ENCODE measurements at regions of chr11 and their contacts with region 1.

Region 1: GRCh38 chr11:14727746-14728145 is 84.1 kb downstream of the PDE3B start:
- DNase-seq: no peak
- H3K4me3 Mint-ChIP-seq: no peak overlapping the region
- H3K27ac Mint-ChIP-seq: no peak overlapping the region
- H3K4me1 Mint-ChIP-seq: peaks cover 52% of the 10 kb centered on the region
- H3K27me3 Mint-ChIP-seq: no peaks in the 10 kb centered on the region

Region 2: DNA sequence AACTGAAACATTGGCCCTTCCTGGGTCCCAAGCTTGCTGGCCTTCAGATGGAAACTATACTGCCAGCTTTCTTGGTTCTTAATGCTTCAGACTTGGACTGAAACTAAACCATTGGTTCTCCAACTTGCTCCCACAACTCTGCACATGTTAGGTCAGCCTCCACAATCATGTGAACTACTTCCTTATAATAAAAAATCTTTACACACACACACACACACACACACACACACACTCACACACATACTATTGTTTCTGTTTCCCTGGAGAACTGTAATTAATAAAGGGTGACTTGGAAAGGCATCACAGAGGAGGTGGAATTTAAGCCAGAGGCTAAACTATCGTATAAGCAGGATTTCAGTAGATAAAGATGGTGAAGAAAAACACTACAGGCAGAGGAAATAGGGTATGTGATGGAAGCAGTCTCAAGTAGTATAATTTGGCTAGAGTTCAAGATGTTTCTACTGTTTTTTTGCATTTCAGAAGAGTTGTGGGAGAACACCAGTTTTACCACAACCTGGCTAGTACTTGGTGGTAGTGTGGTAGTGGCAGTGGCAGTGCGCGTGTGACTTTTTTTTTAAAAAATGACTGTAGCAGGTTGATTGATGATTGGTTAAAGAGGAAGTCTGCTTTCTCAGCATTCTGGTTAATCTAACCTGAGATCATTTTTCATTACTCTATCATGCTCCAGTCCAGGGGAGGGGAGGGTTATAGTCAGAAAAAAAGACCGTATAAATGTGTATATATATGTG is 14.1 kb before region 1 on chr11:
- CTCF ChIA-PET with region 1: interaction called, 3 read pairs
- intact Hi-C with region 1: loop called (anchors 2 kb)
- DNase-seq: peak; percentile 55
- H3K4me3 Mint-ChIP-seq: peak overlapping the region; percentile 72
- H3K27ac Mint-ChIP-seq: peak overlapping the region; percentile 87
- H3K4me1 Mint-ChIP-seq: peaks cover 46% of the 10 kb centered on the region
- H3K27me3 Mint-ChIP-seq: no peaks in the 10 kb centered on the region

Measured in activated naive CD4-positive, alpha-beta T cell treated with anti-CD3 and anti-CD28 coated beads for 36 hours (primary cell).